ENCODE measurements at regions of chr10 and their contacts with region 1.

Region 1: GRCh38 chr10:97059006-97059871 is 126.5 kb downstream of the SLIT1 start:
- DNase-seq: peak in 1 of 2 experiments; percentile 77
- H3K4me3 ChIP-seq: no peak overlapping the region
- H3K27ac ChIP-seq: no peak overlapping the region
- H3K4me1 ChIP-seq: peaks cover 0 to 11% (median 2%) of the 10 kb centered on the region in 4 experiments; a peak in 3 of 7 replicates
- H3K27me3 ChIP-seq: no peaks in the 10 kb centered on the region
- CTCF ChIP-seq: peak; percentile 68 to 71 (median 69)
- EP300 ChIP-seq: no peak
- POLR2A ChIP-seq: no peak
- RAD21 ChIP-seq: peak; percentile 66 to 75

Region 2: GRCh38 chr10:96880575-96880974 is 178.7 kb before region 1 on chr10:
- CTCF ChIA-PET with region 1: no interaction called
- POLR2A ChIA-PET with region 1: no interaction called
- DNase-seq: no peak
- H3K4me3 ChIP-seq: no peak overlapping the region
- H3K27ac ChIP-seq: no peak overlapping the region
- H3K4me1 ChIP-seq: no peaks in the 10 kb centered on the region
- H3K27me3 ChIP-seq: no peaks in the 10 kb centered on the region
- CTCF ChIP-seq: no peak
- EP300 ChIP-seq: no peak
- POLR2A ChIP-seq: no peak
- RAD21 ChIP-seq: no peak

Region 3: GRCh38 chr10:97048649-97049427 is 10.4 kb before region 1 on chr10:
- CTCF ChIA-PET with region 1: interaction called, 10 read pairs
- POLR2A ChIA-PET with region 1: no interaction called
- DNase-seq: no peak
- H3K4me3 ChIP-seq: no peak overlapping the region
- H3K27ac ChIP-seq: no peak overlapping the region
- H3K4me1 ChIP-seq: peaks cover 0 to 5% (median under 1%) of the 10 kb centered on the region in 4 experiments; a peak in 4 of 7 replicates
- H3K27me3 ChIP-seq: no peaks in the 10 kb centered on the region
- CTCF ChIP-seq: no peak
- EP300 ChIP-seq: no peak
- POLR2A ChIP-seq: no peak
- RAD21 ChIP-seq: no peak

Region 4: GRCh38 chr10:97081621-97082235 is 22.5 kb after region 1 on chr10:
- CTCF ChIA-PET with region 1: interaction called, 335 read pairs
- POLR2A ChIA-PET with region 1: no interaction called
- DNase-seq: peak; percentile 63 to 90
- H3K4me3 ChIP-seq: no peak overlapping the region
- H3K27ac ChIP-seq: no peak overlapping the region
- H3K4me1 ChIP-seq: peaks cover 0 to 24% (median 14%) of the 10 kb centered on the region in 4 experiments; a peak in 5 of 7 replicates
- H3K27me3 ChIP-seq: no peaks in the 10 kb centered on the region
- CTCF ChIP-seq: peak; percentile 96 to 99 (median 97)
- EP300 ChIP-seq: no peak
- POLR2A ChIP-seq: no peak
- RAD21 ChIP-seq: peak; percentile 66 to 73